ENCODE measurements at regions of chr16 and their contacts with region 1.

Region 1: GRCh38 chr16:74709441-74709877 is 8.8 kb upstream of the MLKL start:
- DNase-seq: peak; percentile 87
- ATAC-seq: peak; percentile 92

Region 2: GRCh38 chr16:74862741-74863244 is 153.3 kb after region 1 on chr16:
- intact Hi-C with region 1: loop called (anchors 2 kb)
- DNase-seq: no peak
- ATAC-seq: no peak

Region 3: DNA sequence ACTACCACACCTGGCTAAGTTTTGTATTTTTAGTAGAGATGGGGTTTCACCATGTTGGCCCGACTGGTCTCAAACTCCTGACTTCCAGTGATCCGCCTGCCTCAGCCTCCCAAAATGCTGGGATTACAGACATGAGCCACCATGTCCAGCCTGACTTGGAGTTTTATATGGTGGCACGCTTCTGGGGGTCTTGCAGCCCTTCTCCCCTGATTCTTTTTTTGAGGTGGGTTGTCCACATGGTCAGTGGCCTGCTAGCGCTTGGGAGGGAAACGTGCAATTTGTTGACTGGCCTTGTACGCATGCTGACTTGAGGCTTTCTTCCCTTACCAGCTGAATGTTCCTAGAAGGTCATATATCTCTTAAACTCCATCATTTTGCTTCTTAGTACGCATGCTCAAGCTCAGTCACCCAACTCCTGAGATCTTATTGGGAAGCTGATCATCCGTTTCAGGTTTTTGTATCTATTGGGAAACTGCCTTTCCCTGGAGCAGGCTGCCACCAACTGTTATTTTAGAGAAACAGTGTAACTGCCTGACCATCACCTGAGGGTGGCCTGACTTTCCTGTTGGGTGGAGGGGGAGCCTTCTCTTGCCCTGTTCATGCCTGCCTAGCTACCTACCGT is 420.8 kb after region 1 on chr16:
- intact Hi-C with region 1: loop called (anchors 10 kb)
- DNase-seq: no peak
- ATAC-seq: no peak

Measured in Right ventricle myocardium superior (tissue), 1 donor.